Heart left ventricle (tissue), 16 donors: ENCODE measurements at regions of chr6 and their contacts with region 1.

Region 1: GRCh38 chr6:114108119-114109002 is 137.4 kb upstream of the HDAC2 start:
- DNase-seq: peak; percentile 41 to 73 (median 56)
- ATAC-seq: peak in 3 of 4 donors; percentile 49 to 52 (median 50)
- H3K4me3 ChIP-seq: no peak overlapping the region
- H3K27ac ChIP-seq: no peak overlapping the region
- H3K4me1 ChIP-seq: no peaks in the 10 kb centered on the region
- H3K27me3 ChIP-seq: no peaks in the 10 kb centered on the region
- CTCF ChIP-seq: peak; percentile 18 to 70 (median 53)
- POLR2A ChIP-seq: no peak

Region 2: GRCh38 chr6:113980937-113981554 is 127.3 kb before region 1 on chr6:
- intact Hi-C with region 1: loop called in 1 of 10 experiments (anchors 10 kb)
- DNase-seq: no peak
- ATAC-seq: peak in 3 of 4 donors; percentile 45 to 52 (median 48)
- H3K4me3 ChIP-seq: no peak overlapping the region
- H3K27ac ChIP-seq: no peak overlapping the region
- H3K4me1 ChIP-seq: peaks cover 0 to 11% (median 0%) of the 10 kb centered on the region in 12 donors
- H3K27me3 ChIP-seq: no peaks in the 10 kb centered on the region
- CTCF ChIP-seq: peak in 11 of 12 donors; percentile 22 to 52 (median 43)
- POLR2A ChIP-seq: no peak

Region 3: DNA sequence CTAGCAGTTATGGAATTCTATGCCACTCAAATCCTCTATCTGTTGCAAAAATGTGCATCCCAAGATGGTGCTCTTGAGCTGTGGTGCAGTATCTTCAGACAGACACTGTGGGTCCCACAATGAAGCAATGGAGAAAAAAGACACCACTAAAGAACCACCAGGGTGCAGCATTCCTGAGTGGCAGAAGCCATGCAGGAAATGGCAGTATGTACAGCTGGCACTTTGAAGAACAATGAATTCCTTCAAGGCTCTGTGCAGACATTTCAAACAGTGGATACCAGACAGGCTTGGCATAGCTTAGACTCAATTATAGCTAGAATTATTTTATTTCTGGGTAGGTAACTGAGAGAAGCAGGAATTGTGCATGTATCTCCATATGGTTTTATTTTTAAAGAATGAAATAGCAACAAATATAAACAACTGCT is 113.4 kb before region 1 on chr6:
- intact Hi-C with region 1: loop called in 9 of 10 experiments (anchors 2 to 10 kb)
- DNase-seq: peak in 2 of 5 donors; percentile 26
- ATAC-seq: peak; percentile 53 to 84 (median 79)
- H3K4me3 ChIP-seq: no peak overlapping the region
- H3K27ac ChIP-seq: peak overlapping the region in 4 of 12 donors; percentile 1 to 22 (median 19)
- H3K4me1 ChIP-seq: peaks cover 0 to 32% (median 18%) of the 10 kb centered on the region in 12 donors
- H3K27me3 ChIP-seq: no peaks in the 10 kb centered on the region
- CTCF ChIP-seq: peak; percentile 24 to 61 (median 44)
- POLR2A ChIP-seq: no peak

Region 4: DNA sequence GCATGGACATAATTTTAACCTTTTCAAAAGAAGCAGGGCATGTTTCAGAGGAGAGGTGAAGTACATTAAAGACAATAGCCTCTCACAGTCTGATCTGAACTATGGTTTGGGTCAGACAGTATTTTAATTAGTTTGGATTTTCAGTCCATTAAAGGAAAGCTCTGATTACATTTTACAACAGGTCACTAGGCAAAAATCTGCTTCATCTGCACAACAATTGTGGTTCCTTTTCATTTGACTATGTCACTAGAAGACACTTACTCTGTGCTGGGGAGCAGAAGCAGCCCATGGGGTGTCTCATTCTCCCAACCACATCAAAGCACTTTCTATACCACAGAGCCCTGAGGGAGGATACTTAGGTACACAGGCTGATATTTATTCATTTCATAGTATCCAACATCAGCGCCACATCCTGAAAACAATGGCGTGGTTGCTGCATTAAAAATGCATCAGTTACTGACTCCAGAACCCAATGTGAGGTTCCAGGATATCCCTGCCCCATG is 100.9 kb before region 1 on chr6:
- intact Hi-C with region 1: loop called in 1 of 10 experiments (anchors 10 kb)
- DNase-seq: no peak
- ATAC-seq: no peak
- H3K4me3 ChIP-seq: no peak overlapping the region
- H3K27ac ChIP-seq: no peak overlapping the region
- H3K4me1 ChIP-seq: peaks cover 0 to 6% (median 0%) of the 10 kb centered on the region in 12 donors
- H3K27me3 ChIP-seq: no peaks in the 10 kb centered on the region
- CTCF ChIP-seq: no peak
- POLR2A ChIP-seq: no peak

Region 5: GRCh38 chr6:114195631-114196403 is 87.5 kb after region 1 on chr6:
- intact Hi-C with region 1: no loop called
- DNase-seq: no peak
- ATAC-seq: no peak
- H3K4me3 ChIP-seq: no peak overlapping the region
- H3K27ac ChIP-seq: no peak overlapping the region
- H3K4me1 ChIP-seq: peaks cover 0 to 15% (median 0%) of the 10 kb centered on the region in 12 donors
- H3K27me3 ChIP-seq: no peaks in the 10 kb centered on the region
- CTCF ChIP-seq: no peak
- POLR2A ChIP-seq: no peak

Region 6: DNA sequence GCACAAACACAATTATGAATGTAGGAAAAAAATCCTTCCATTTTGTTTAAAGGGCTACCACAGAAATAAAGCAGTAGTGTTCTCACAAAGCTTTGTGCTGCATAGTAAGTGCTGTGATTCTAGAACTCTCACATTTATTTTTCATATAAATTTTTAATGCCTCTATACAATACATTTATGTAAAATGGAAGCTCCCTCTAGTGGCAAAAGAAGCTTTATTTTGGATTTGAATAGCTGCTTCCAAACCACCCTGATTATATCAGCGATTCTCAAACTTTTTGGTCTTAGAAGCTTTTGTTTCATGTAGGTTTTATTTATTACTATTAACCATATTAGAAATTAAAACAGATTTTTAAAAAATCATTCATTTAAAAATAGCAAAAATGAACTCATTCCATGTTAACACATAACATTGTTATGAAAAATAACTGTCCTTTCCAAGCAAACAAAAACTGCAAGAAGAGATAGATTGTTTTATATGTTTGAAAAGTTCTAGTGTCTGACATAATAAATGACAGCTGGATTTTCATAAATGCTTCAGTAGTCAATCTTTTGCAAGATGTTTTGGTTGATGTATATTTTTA is 196.0 kb after region 1 on chr6:
- intact Hi-C with region 1: loop called in 2 of 10 experiments (anchors 10 kb)
- DNase-seq: no peak
- ATAC-seq: no peak
- H3K4me3 ChIP-seq: no peak overlapping the region
- H3K27ac ChIP-seq: no peak overlapping the region
- H3K4me1 ChIP-seq: no peaks in the 10 kb centered on the region
- H3K27me3 ChIP-seq: no peaks in the 10 kb centered on the region
- CTCF ChIP-seq: peak; percentile 18 to 60 (median 46)
- POLR2A ChIP-seq: no peak

Region 7: DNA sequence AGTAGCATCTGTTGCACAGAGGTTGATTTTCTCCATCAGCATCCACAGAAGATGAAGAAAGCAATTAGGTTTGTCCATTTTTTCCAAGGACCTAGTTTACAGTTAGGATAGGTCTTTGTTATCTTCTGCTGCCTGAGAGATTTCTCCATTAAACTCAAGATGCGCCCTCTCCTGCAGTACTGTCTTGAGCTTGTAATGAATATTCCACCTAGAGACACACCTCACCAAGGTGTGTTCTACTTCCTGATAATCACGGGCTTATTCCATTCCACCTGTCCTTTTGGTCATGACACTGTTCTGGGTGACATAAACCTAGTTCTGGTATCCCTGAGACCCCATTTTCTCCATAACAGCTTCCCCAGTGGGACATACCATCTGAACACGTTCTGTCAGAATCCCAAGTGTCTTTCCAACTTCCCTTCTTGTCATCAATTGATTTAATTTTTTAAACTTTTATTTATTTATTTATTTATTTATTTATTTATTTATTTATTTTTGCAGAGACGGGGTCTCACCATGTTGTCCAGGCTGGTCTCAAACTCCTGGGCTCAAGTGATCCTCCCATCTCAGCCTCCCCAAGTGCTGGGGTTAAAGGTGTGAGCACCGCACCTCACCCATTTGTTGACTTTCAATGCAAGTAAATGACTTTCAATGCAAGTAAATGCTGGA is 310.1 kb after region 1 on chr6:
- intact Hi-C with region 1: no loop called
- DNase-seq: no peak
- ATAC-seq: no peak
- H3K4me3 ChIP-seq: no peak overlapping the region
- H3K27ac ChIP-seq: no peak overlapping the region
- H3K4me1 ChIP-seq: no peaks in the 10 kb centered on the region
- H3K27me3 ChIP-seq: peaks cover 0 to 5% (median 0%) of the 10 kb centered on the region in 9 donors
- CTCF ChIP-seq: no peak
- POLR2A ChIP-seq: no peak